B cell (primary cell): ENCODE measurements at regions of chr20 and their contacts with region 1.

Region 1: GRCh38 chr20:1619861-1620444 is at the start of gene SIRPB1:
- DNase-seq: peak; percentile 43
- ATAC-seq: no peak
- H3K4me3 ChIP-seq: peak within 1 kb of the TSS in 3 of 5 experiments; percentile 11 to 74 (median 27)
- H3K4me3 Mint-ChIP-seq: peak within 1 kb of the TSS; percentile 5
- H3K27ac ChIP-seq: peak within 1 kb of the TSS; percentile 21 to 58
- H3K27ac Mint-ChIP-seq: peak within 1 kb of the TSS; percentile 70
- H3K4me1 ChIP-seq: peaks cover 61 to 67% of the 10 kb centered on the region in 2 donors
- H3K4me1 Mint-ChIP-seq: peaks cover 68% of the 10 kb centered on the region
- H3K27me3 ChIP-seq: no peaks in the 10 kb centered on the region
- H3K27me3 Mint-ChIP-seq: no peaks in the 10 kb centered on the region
- CTCF ChIP-seq: no peak
- total RNA-seq, gene SIRPB1: 1.3 and 1.7 TPM in 2 replicates

Region 2: DNA sequence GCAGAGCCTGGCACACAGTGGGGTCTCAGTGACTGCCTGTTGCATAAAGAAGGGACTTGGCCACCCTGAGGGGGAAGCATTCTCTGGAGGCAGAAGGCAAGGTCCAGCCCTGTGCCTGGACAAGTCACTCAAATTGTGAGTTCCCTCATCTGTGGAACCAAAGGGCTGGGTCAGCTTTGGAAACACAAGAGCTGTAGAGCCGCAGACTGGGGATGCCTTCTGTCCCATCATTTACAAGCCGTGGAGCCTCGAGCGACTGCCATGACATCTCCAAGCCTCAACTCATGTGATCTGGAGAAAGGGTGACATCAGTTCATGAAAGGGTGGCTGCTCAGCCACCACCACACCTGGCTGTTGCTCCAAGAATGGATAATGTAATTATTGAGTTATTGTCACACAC is 42.0 kb before region 1 on chr20:
- CTCF ChIA-PET with region 1: no interaction called
- POLR2A ChIA-PET with region 1: no interaction called
- intact Hi-C with region 1: loop called (anchors 2 kb)
- DNase-seq: no peak
- ATAC-seq: no peak
- H3K4me3 ChIP-seq: no peak overlapping the region
- H3K4me3 Mint-ChIP-seq: no peak overlapping the region
- H3K27ac ChIP-seq: no peak overlapping the region
- H3K27ac Mint-ChIP-seq: no peak overlapping the region
- H3K4me1 ChIP-seq: no peaks in the 10 kb centered on the region
- H3K4me1 Mint-ChIP-seq: no peaks in the 10 kb centered on the region
- H3K27me3 ChIP-seq: no peaks in the 10 kb centered on the region
- H3K27me3 Mint-ChIP-seq: no peaks in the 10 kb centered on the region
- CTCF ChIP-seq: no peak

Region 3: GRCh38 chr20:1600736-1601135 is 19.2 kb before region 1 on chr20:
- CTCF ChIA-PET with region 1: no interaction called
- POLR2A ChIA-PET with region 1: no interaction called
- intact Hi-C with region 1: no loop called
- DNase-seq: no peak
- ATAC-seq: no peak
- H3K4me3 ChIP-seq: no peak overlapping the region
- H3K4me3 Mint-ChIP-seq: no peak overlapping the region
- H3K27ac ChIP-seq: no peak overlapping the region
- H3K27ac Mint-ChIP-seq: no peak overlapping the region
- H3K4me1 ChIP-seq: no peaks in the 10 kb centered on the region
- H3K4me1 Mint-ChIP-seq: no peaks in the 10 kb centered on the region
- H3K27me3 ChIP-seq: no peaks in the 10 kb centered on the region
- H3K27me3 Mint-ChIP-seq: no peaks in the 10 kb centered on the region
- CTCF ChIP-seq: no peak

Region 4: GRCh38 chr20:1964659-1965405 is 344.9 kb after region 1 on chr20:
- CTCF ChIA-PET with region 1: no interaction called
- POLR2A ChIA-PET with region 1: no interaction called
- intact Hi-C with region 1: no loop called
- DNase-seq: no peak
- ATAC-seq: peak; percentile 16
- H3K4me3 ChIP-seq: peak overlapping the region; percentile 9 to 57 (median 42)
- H3K4me3 Mint-ChIP-seq: peak overlapping the region; percentile 50
- H3K27ac ChIP-seq: no peak overlapping the region
- H3K27ac Mint-ChIP-seq: no peak overlapping the region
- H3K4me1 ChIP-seq: peaks cover 16 to 18% of the 10 kb centered on the region in 2 donors
- H3K4me1 Mint-ChIP-seq: peaks cover 18% of the 10 kb centered on the region
- H3K27me3 ChIP-seq: no peaks in the 10 kb centered on the region
- H3K27me3 Mint-ChIP-seq: no peaks in the 10 kb centered on the region
- CTCF ChIP-seq: no peak